Activated B cell treated with CpG ODN at 0.5 μM for 24 hours (primary cell): ENCODE measurements at regions of chr21 and their contacts with region 1.

Region 1: GRCh38 chr21:29232601-29233546 is 65.8 kb upstream of the BACH1 start:
- DNase-seq: no peak
- ATAC-seq: peak; percentile 42
- H3K4me3 Mint-ChIP-seq: peak overlapping the region; percentile 72
- H3K27ac Mint-ChIP-seq: peak overlapping the region; percentile 96
- H3K4me1 Mint-ChIP-seq: peaks cover 78% of the 10 kb centered on the region
- H3K27me3 Mint-ChIP-seq: no peaks in the 10 kb centered on the region
- CTCF ChIP-seq: no peak

Region 2: GRCh38 chr21:29091032-29091431 is 141.8 kb before region 1 on chr21:
- CTCF ChIA-PET with region 1: interaction called, 5 read pairs
- POLR2A ChIA-PET with region 1: no interaction called
- intact Hi-C with region 1: loop called (anchors 1 kb)
- DNase-seq: no peak
- ATAC-seq: no peak
- H3K4me3 Mint-ChIP-seq: no peak overlapping the region
- H3K27ac Mint-ChIP-seq: no peak overlapping the region
- H3K4me1 Mint-ChIP-seq: no peaks in the 10 kb centered on the region
- H3K27me3 Mint-ChIP-seq: no peaks in the 10 kb centered on the region
- CTCF ChIP-seq: no peak

Region 3: GRCh38 chr21:29164325-29164942 is 68.4 kb before region 1 on chr21:
- CTCF ChIA-PET with region 1: no interaction called
- POLR2A ChIA-PET with region 1: no interaction called
- intact Hi-C with region 1: loop called (anchors 1 kb)
- DNase-seq: no peak
- ATAC-seq: peak; percentile 57
- H3K4me3 Mint-ChIP-seq: no peak overlapping the region
- H3K27ac Mint-ChIP-seq: no peak overlapping the region
- H3K4me1 Mint-ChIP-seq: peaks cover 7% of the 10 kb centered on the region
- H3K27me3 Mint-ChIP-seq: no peaks in the 10 kb centered on the region
- CTCF ChIP-seq: no peak

Region 4: GRCh38 chr21:29208682-29209059 is 24.2 kb before region 1 on chr21:
- CTCF ChIA-PET with region 1: no interaction called
- POLR2A ChIA-PET with region 1: interaction called, 7 read pairs
- intact Hi-C with region 1: loop called (anchors 1 kb)
- DNase-seq: no peak
- ATAC-seq: peak; percentile 67
- H3K4me3 Mint-ChIP-seq: peak overlapping the region; percentile 62
- H3K27ac Mint-ChIP-seq: peak overlapping the region; percentile 84
- H3K4me1 Mint-ChIP-seq: peaks cover 23% of the 10 kb centered on the region
- H3K27me3 Mint-ChIP-seq: no peaks in the 10 kb centered on the region
- CTCF ChIP-seq: no peak

Region 5: DNA sequence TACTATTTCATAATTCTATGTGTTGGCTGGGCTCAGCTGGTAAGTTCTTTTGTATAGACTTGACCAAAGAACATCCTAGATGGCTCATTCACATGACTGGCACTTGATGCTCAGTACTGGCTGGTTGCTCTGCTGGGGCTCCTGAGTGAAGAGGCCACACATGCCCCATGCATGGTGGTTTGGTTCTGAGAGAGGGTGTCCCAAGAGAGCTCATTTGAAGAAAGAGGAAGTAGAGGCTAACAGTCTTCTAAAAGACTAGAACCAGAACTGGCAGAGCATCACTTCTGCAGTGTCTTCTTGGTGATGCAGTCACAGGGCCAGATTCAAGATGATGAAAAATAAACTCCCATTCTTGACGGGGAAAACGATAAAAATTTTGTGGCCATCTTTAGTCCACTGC is 60.6 kb after region 1 on chr21:
- CTCF ChIA-PET with region 1: interaction called, 27 read pairs
- POLR2A ChIA-PET with region 1: interaction called, 137 read pairs
- intact Hi-C with region 1: loop called (anchors 1 kb)
- DNase-seq: peak; percentile 36
- ATAC-seq: peak; percentile 96
- H3K4me3 Mint-ChIP-seq: peak overlapping the region; percentile 11
- H3K27ac Mint-ChIP-seq: peak overlapping the region; percentile 90
- H3K4me1 Mint-ChIP-seq: peaks cover 48% of the 10 kb centered on the region
- H3K27me3 Mint-ChIP-seq: no peaks in the 10 kb centered on the region
- CTCF ChIP-seq: no peak

Region 6: GRCh38 chr21:29372063-29372802 is 139.4 kb after region 1 on chr21:
- CTCF ChIA-PET with region 1: interaction called, 18 read pairs
- POLR2A ChIA-PET with region 1: no interaction called
- intact Hi-C with region 1: loop called (anchors 1 kb)
- DNase-seq: no peak
- ATAC-seq: peak; percentile 83
- H3K4me3 Mint-ChIP-seq: no peak overlapping the region
- H3K27ac Mint-ChIP-seq: peak overlapping the region; percentile 46
- H3K4me1 Mint-ChIP-seq: peaks cover 13% of the 10 kb centered on the region
- H3K27me3 Mint-ChIP-seq: no peaks in the 10 kb centered on the region
- CTCF ChIP-seq: peak; percentile 66